Psoas muscle (tissue), 8 donors: ENCODE measurements at regions of chr6 and their contacts with region 1.

Region 1: GRCh38 chr6:36765594-36766398 is 68.2 kb downstream of the RAB44 start:
- DNase-seq: peak; percentile 81 to 89
- ATAC-seq: peak; percentile 64 to 86 (median 68)
- H3K4me3 ChIP-seq: no peak overlapping the region
- H3K27ac ChIP-seq: no peak overlapping the region
- H3K4me1 ChIP-seq: peaks cover 19% of the 10 kb centered on the region
- H3K27me3 ChIP-seq: no peaks in the 10 kb centered on the region
- CTCF ChIP-seq: peak; percentile 89

Region 2: DNA sequence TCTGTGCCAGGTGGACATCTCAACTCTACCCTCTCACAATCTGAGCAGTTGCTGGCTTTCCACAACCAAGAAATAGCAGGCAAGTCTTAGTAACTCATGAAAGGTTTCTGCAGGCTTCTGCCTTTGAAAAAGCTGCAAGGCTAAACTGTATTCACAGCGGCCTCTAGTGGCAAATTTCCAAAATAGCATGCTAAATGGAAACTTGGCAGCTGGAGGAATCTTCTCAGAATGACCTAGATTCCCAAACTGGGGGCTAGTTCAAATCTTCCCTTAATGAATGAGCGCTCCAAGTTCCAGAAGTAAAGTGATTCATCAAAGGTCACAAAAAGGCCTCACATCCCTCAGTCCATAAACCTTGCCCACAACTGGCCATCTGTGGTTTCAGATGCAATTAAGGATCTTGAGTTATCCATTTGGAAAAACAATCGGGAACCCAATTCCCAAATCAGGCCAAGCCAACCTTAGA is 85.4 kb after region 1 on chr6:
- intact Hi-C with region 1: loop called (anchors 1 to 2 kb)
- DNase-seq: no peak
- ATAC-seq: peak; percentile 5 to 59 (median 47)
- H3K4me3 ChIP-seq: no peak overlapping the region
- H3K27ac ChIP-seq: peak overlapping the region; percentile 94
- H3K4me1 ChIP-seq: peaks cover 36% of the 10 kb centered on the region
- H3K27me3 ChIP-seq: no peaks in the 10 kb centered on the region
- CTCF ChIP-seq: peak; percentile 77

Region 3: DNA sequence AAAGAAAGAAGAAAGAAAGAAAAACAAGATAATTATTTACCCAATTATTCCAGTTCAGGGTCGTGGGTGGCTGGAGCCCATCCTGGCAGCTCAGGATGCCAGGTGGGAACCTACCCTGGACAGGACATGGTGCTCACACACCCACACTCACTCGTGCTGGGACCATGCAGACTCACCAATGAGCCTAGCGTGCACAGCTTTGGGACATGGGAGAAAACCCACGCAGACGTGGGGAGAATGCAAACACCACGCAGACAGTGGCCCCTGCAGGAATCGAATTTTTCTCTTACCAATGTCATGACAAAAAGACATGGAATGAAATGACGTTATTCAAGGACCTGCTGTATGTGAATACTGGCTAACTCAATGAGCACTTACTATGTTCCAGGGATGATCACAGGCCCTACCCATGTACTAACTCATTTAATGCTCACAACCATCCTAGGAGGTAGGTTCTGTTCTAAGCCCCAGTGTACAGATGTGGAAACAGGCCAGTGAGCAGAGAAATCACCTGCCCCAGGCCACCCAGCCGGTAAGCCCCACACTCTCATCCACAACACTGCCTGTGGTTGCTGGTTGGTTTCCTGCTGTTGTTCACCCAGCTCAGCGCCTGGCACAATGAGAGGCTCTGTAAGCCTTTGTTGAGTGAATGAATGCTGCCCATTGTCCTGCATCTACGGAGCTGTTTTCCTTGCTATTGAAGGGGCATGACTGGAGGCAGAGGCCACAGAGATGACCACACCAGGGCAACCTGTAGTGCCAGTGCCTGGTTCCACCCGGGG is 182.0 kb after region 1 on chr6:
- intact Hi-C with region 1: no loop called
- DNase-seq: no peak
- ATAC-seq: no peak
- H3K4me3 ChIP-seq: no peak overlapping the region
- H3K27ac ChIP-seq: no peak overlapping the region
- H3K4me1 ChIP-seq: no peaks in the 10 kb centered on the region
- H3K27me3 ChIP-seq: peaks cover 0 to 2% (median 0%) of the 10 kb centered on the region in 3 donors
- CTCF ChIP-seq: no peak

Region 4: DNA sequence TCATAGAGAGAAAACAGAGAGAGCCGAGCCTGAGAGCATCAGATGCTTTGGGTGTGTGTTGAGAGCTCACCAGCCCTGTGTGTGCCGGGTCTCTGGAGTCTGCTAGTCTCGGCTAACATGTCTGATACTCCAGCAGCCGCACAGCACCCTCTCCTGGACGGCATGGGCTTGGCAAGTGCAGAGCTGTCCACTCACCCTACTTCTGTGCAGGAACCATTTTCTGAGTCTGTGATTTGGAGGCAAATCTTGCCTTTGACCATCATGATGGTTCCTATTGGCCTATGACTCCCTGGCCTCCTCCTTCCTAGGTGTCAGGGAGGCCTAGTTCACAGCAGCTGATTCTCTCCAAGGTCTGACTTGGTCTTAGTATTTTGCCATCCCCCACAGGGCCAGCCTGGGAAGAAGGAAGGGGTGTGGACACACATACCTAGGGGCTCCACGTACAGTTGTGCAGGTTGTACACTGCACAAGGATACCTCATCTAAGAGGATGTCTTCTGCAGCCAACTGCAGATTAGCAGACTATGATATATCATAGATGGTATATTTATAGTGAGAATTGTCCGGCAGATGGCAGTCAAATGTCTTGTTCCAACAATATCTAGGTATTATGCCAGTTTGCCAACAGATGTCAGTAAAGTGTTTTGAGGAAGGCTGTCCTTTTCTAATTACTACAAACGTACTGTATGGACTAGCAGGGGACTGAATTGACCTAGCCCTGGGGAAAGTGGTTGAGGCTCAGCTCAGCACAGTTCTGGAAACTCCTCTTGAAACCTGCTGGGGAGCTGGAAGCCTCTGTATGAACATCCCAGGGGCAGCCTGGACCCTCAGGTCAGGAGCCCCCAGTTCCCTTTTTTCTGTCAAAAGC is 252.6 kb after region 1 on chr6:
- intact Hi-C with region 1: loop called (anchors 1 to 5 kb)
- DNase-seq: peak; percentile 90 to 95
- ATAC-seq: peak; percentile 96 to 99 (median 98)
- H3K4me3 ChIP-seq: no peak overlapping the region
- H3K27ac ChIP-seq: no peak overlapping the region
- H3K4me1 ChIP-seq: peaks cover 3% of the 10 kb centered on the region
- H3K27me3 ChIP-seq: no peaks in the 10 kb centered on the region
- CTCF ChIP-seq: peak; percentile 74

Region 5: DNA sequence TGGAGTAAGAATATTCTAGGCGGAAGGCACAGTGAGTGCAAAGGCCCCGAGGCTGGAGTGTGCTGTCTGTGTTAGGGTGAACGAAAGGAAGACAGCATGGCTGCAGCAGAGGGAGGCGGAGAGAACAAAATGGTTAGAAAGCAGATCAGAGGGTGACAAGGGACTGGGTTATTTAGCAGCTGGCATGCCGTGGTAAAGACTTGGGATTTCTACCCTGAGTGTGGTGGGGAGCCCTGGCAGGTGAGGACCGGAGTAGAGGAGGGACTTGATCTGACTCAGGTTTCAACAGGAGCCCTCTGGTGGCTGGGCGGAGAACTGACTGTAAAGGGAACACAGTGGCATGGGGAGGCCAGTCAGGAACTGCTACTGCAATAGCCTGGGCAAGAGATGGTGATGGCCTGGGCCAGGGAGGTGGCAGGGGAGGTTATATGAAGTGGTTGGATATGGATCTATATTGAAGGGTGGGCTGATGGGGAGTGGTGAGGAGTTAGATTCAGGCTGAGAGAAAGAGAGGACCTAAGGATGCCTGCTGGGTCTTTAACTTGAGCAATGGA is 442.2 kb after region 1 on chr6:
- intact Hi-C with region 1: loop called in 1 of 2 experiments (anchors 10 kb)
- DNase-seq: peak; percentile 83 to 85
- ATAC-seq: peak; percentile 64 to 76 (median 74)
- H3K4me3 ChIP-seq: no peak overlapping the region
- H3K27ac ChIP-seq: no peak overlapping the region
- H3K4me1 ChIP-seq: no peaks in the 10 kb centered on the region
- H3K27me3 ChIP-seq: no peaks in the 10 kb centered on the region
- CTCF ChIP-seq: peak; percentile 66